ENCODE measurements at regions of chr6 and their contacts with region 1.

Region 1: DNA sequence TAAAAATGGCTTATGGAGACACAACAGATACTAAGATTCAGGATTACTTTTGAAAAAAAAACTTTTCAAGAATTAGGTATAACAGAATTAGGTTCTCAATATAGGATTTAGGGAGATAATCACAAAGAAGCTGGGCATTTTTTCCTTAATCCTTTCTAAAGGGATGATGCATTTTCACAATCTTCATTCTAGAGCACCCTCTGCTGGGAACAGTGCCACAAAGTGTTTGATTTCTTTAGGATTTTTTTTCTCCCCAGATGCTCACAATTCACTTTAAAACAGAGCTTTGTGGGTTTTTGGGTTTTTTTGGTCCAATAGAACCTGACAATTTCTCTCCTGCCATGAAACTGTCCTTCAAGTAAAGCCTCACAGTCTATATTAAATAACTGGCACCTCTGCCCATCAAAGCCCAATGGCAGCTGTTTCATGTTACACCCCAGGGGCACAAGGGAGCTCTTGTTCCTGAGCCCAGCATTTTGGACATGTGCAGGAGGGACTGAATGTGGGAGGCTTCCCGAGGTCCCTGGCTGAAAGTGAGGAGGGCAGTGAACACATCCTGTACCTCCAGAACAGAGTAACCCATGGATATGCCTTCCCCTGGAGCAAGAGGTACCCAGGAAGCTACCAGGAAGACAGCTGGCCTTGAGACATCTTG is 39.7 kb downstream of the PREP start:
- H3K4me3 ChIP-seq: no peak overlapping the region
- H3K27ac ChIP-seq: no peak overlapping the region
- H3K4me1 ChIP-seq: no peaks in the 10 kb centered on the region
- CTCF ChIP-seq: no peak

Region 2: DNA sequence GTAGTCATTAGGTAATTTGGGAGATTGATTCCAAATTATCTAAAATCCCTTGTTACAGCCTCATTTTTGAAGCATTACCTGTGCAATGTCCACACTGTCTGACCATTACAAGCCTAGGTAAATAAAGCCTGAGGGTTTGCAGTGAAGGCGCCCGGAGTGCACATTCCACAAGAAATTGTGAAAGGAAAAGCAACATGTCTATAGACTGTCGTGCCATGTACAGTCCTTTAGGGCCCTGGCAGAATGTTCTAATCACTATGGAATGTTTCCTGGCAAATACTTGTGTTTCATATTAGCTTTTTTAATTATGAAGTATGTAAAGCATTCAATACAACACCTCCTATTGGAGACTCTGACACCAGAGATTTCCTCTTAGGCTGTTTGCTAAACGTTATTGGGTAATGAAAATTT is 10.8 kb after region 1 on chr6:
- CTCF ChIA-PET with region 1: interaction called, 30 read pairs
- POLR2A ChIA-PET with region 1: no interaction called
- H3K4me3 ChIP-seq: no peak overlapping the region
- H3K27ac ChIP-seq: no peak overlapping the region
- H3K4me1 ChIP-seq: no peaks in the 10 kb centered on the region
- CTCF ChIP-seq: no peak

Measured in HEK293 (cell line).